ENCODE measurements at regions of chr7 and their contacts with region 1.

Region 1: DNA sequence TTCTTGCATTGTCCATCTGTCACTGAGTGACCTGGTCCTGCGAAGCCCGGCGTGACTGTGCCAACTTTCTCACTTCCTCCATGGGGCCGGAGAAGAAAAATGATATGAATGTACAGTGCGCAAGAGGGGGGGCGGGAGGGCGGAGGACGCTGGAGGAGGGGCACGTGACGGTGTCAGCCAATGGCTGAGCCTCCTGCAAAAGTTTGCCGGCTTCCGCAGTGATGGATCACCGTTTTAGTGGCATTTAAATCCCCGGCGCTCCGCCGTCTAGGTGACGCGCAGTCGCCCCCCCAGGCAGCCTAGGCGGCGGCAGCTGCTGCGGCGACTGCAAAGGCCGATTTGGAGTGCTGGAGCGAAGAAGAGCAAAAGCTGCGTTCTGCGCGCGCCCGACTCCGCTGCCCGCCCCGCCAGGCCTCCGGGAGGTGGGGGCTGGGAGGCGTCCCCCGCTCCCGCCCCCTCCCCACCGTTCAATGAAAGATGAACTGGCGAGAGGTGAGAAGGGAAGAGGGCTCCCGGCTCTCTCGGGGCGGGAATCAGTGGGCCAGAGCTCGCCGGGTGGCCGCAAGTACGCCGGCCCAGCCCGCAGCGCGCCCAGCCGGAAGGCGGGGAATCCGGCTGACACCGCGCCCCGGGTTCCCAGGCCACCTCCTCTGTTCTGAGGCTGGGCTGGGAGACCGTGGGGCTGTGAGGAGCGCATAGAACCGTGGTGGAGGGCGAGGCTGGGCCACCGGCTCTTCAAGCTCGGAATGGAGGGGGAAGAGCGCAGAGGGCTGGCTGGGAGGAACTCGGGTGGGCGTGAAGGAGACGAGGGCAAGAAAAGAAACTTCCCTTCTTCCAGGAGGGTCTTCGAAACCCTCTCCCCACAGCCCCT is at the start of gene HOXA1:
- DNase-seq: peak; percentile 94
- H3K4me3 ChIP-seq: peak within 1 kb of the TSS; percentile 80
- H3K27ac ChIP-seq: peak within 1 kb of the TSS; percentile 58
- H3K4me1 ChIP-seq: peaks cover 31% of the 10 kb centered on the region
- CTCF ChIP-seq: peak; percentile 33; the same call in 1 of the 2 replicates
- total RNA-seq, gene HOXA1: 1.6 and 3.0 TPM in 2 replicates

Region 2: GRCh38 chr7:27083646-27084045 is 12.5 kb before region 1 on chr7:
- CTCF ChIA-PET with region 1: no interaction called
- POLR2A ChIA-PET with region 1: interaction called, 10 read pairs
- intact Hi-C with region 1: no loop called
- DNase-seq: no peak
- H3K4me3 ChIP-seq: no peak overlapping the region
- H3K27ac ChIP-seq: no peak overlapping the region
- H3K4me1 ChIP-seq: no peaks in the 10 kb centered on the region
- CTCF ChIP-seq: no peak

Region 3: GRCh38 chr7:27150568-27151340 is 54.6 kb after region 1 on chr7:
- CTCF ChIA-PET with region 1: no interaction called
- POLR2A ChIA-PET with region 1: interaction called, 5 read pairs
- intact Hi-C with region 1: loop called (anchors 2 kb)
- DNase-seq: peak; percentile 86
- H3K4me3 ChIP-seq: peak overlapping the region; percentile 75
- H3K27ac ChIP-seq: no peak overlapping the region
- H3K4me1 ChIP-seq: peaks cover 48% of the 10 kb centered on the region
- CTCF ChIP-seq: peak; percentile 84